MCF 10A (cell line): ENCODE measurements at regions of chr5 and their contacts with region 1.

Region 1: GRCh38 chr5:138575194-138576015 is at the start of gene HSPA9:
- DNase-seq: peak; percentile 100
- H3K4me3 Mint-ChIP-seq: peak within 1 kb of the TSS; percentile 95
- H3K27ac Mint-ChIP-seq: peak within 1 kb of the TSS; percentile 100
- H3K4me1 Mint-ChIP-seq: peaks cover 23% of the 10 kb centered on the region
- H3K27me3 Mint-ChIP-seq: no peaks in the 10 kb centered on the region
- CTCF ChIP-seq: no peak
- total RNA-seq, gene HSPA9: 1,057 and 1,102 TPM in 2 replicates

Region 2: DNA sequence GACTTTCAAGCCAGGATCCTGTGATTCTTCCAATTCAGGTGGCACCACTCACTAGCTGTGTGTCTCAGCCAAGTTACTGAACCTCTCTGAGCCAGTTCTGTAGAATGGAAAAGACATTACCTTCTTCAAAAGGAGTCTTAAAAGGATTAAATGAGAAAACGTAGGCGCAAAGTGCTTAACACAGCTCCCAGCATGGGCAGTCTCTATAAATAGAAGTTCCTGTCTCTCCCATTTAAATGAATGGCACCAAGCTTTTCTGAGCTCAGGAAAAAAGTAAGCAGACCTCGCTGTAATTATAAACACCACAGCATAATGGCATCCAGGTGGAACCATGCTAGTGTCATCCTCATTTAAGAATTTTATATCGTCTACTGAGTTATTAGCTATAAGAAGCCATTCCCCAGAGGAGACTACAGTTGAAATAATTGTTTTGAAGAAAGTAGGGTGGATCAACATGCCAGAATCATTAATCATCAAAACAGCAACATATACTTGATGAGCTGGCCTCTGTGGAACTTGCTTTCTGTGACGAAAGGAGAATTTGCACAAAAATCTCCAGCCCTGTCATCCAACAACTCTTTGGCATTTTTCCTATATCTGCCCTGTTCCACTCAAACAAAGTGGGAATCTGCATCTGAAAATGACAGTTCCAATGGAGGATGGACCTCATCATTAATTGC is 1265.2 kb before region 1 on chr5:
- CTCF ChIA-PET with region 1: no interaction called
- POLR2A ChIA-PET with region 1: no interaction called
- intact Hi-C with region 1: no loop called
- DNase-seq: peak; percentile 88
- H3K4me3 Mint-ChIP-seq: peak overlapping the region; percentile 18
- H3K27ac Mint-ChIP-seq: peak overlapping the region; percentile 95
- H3K4me1 Mint-ChIP-seq: peaks cover 28% of the 10 kb centered on the region
- H3K27me3 Mint-ChIP-seq: no peaks in the 10 kb centered on the region
- CTCF ChIP-seq: no peak

Region 3: DNA sequence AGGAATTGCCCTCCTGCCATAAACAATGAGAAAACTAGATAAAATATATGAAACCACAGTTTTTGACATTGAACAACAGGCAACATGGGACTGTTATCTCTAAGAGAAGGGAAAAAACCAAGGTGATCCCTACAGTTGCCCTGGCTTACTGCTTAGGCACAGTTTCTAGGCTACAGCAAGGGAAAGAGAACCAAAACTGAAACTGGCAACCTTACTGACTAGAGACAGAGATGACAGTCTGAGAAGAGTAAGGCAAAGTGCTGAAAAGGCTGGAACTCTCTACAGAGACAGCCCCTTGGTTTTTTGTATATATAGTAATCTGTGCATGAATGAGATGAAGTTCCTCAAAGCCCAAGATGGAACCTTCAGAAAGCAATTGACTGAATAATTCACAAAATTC is 172.8 kb before region 1 on chr5:
- CTCF ChIA-PET with region 1: no interaction called
- POLR2A ChIA-PET with region 1: no interaction called
- intact Hi-C with region 1: no loop called
- DNase-seq: no peak
- H3K4me3 Mint-ChIP-seq: no peak overlapping the region
- H3K27ac Mint-ChIP-seq: no peak overlapping the region
- H3K4me1 Mint-ChIP-seq: peaks cover 5% of the 10 kb centered on the region
- H3K27me3 Mint-ChIP-seq: no peaks in the 10 kb centered on the region
- CTCF ChIP-seq: no peak

Region 4: DNA sequence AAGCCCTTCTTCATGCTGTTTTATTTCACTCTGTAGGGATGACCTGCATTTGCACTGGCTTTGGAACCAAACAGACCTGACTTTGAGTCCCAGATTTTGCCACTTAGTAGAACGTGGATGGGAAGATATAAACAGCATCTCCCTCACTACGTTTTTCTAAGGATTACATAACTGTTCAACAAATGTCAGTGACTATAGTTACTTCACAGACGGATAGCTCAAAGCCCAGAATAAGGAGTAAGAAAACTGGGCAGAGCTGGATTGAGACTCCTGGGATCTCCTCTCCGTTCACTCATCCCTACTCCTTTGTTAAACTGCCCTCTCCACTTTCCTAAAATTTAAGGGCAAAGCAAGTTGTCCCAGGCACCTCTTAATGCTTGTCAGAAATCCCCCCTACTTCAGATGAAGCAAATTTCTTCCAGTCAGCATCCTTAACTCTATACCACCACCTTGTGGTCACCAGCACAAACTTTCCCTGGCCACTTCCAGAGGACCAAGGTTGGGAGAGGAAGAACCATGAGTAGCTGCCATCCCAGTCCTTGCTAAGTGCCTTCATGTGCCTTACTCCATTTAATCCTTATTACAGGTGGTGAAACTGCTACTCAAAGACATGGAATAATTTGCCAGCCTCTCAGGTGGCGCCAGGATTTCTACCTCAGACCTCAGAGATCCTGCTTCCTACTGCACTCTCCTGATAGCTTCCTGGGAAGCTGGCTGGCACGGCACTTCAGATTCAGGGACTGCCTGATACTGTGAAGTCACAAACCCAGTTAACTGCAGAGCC is 71.7 kb before region 1 on chr5:
- CTCF ChIA-PET with region 1: interaction called, 5 read pairs
- POLR2A ChIA-PET with region 1: interaction called, 32 read pairs
- intact Hi-C with region 1: no loop called
- DNase-seq: peak; percentile 86
- H3K4me3 Mint-ChIP-seq: no peak overlapping the region
- H3K27ac Mint-ChIP-seq: no peak overlapping the region
- H3K4me1 Mint-ChIP-seq: peaks cover 58% of the 10 kb centered on the region
- H3K27me3 Mint-ChIP-seq: no peaks in the 10 kb centered on the region
- CTCF ChIP-seq: peak; percentile 79

Region 5: DNA sequence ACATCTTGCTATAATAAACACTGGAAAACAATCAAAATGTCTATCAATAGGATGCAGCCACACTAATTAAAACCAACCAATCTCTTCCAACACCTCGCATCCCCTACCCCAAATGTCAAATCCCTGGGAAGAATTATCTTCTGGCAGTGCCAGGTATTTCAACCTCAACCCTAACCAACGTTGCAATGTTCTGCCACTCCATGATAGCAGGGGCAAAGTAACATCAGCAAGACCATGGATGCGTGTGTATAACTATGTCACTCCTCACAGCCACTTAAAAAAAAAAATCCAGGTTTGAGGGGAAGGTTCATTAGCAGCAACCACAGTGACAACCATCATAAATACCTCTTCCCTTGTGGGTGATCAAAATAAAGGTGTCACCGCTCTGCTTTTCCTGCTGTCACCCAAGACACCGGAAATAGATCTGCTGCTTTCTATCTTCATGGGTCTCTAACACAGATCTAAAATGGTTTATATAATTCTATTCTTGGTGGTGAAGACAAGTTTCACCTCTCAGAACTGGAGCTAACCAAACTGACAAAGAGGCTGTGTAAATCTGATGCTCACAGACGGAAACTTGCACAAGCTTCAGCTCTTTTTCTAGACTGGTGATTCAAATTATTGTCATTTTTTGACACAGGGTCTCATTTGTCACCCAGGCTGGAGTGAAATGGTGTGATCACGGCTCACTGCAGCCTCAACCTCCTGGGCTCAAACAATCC is 10.1 kb before region 1 on chr5:
- CTCF ChIA-PET with region 1: interaction called, 7 read pairs
- POLR2A ChIA-PET with region 1: interaction called, 20 read pairs
- intact Hi-C with region 1: no loop called
- DNase-seq: no peak
- H3K4me3 Mint-ChIP-seq: no peak overlapping the region
- H3K27ac Mint-ChIP-seq: no peak overlapping the region
- H3K4me1 Mint-ChIP-seq: peaks cover 29% of the 10 kb centered on the region
- H3K27me3 Mint-ChIP-seq: no peaks in the 10 kb centered on the region
- CTCF ChIP-seq: no peak

Region 6: DNA sequence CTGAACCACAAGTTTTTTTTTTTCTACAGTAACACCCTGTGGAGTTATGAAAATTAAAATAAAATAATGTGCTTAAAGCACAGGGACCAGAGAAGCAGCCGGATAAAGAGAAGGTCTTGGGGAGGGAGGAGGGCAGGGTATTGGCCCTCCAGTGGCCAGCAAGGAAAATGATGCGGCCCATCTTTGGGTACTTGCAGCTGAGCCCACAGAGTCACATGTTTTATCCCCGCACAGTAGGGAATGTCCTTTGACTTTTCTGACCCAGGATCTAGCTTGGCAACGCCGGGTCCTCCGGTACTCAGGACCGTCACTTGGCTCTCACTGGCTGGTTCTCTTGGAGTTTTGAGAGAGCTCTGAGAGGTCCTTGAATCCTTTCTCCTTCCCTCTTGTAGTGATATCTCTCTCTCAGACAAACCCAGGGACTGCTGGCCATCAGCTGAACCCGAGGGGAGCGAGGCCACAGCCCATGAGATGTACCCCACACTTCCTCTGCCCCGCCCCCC is 35.1 kb after region 1 on chr5:
- CTCF ChIA-PET with region 1: interaction called, 7 read pairs
- POLR2A ChIA-PET with region 1: interaction called, 19 read pairs
- intact Hi-C with region 1: no loop called
- DNase-seq: no peak
- H3K4me3 Mint-ChIP-seq: no peak overlapping the region
- H3K27ac Mint-ChIP-seq: peak overlapping the region; percentile 21
- H3K4me1 Mint-ChIP-seq: peaks cover 28% of the 10 kb centered on the region
- H3K27me3 Mint-ChIP-seq: no peaks in the 10 kb centered on the region
- CTCF ChIP-seq: peak; percentile 4

Region 7: DNA sequence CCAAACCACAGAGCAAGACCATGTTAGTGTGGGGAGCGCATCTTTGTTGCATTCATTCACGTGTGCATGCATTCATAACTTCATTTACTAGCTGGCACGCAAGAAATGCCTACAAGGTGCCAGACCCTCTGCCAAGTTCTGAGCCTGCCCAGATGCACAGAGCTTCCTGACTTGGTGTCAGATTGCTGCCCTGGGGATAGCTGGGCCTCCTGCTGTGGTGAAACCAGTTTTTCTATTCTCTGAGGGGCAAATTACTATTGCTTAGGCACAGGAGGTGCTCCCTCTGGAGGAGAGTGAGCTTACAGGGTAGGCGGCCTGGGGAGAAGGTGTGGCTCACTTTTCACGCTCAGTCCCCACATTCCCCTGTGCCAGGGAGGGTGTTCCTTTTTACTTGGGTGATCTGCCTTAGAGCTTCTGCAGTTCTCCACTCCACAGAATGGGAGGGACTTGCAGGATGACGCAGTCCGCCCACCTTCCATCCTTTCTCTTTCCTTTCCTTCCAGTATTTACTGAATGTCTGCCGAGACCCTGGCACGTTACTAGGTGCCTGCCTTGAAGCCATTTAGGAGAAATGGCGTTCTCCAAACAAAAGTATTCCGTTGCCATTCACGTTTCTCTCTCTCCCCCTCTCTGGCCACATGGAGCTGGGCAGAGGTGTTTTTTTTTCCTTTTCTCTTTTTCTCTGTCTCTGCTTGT is 149.9 kb after region 1 on chr5:
- CTCF ChIA-PET with region 1: interaction called, 11 read pairs
- POLR2A ChIA-PET with region 1: interaction called, 14 read pairs
- intact Hi-C with region 1: loop called (anchors 1 kb)
- DNase-seq: peak; percentile 100
- H3K4me3 Mint-ChIP-seq: peak overlapping the region; percentile 51
- H3K27ac Mint-ChIP-seq: peak overlapping the region; percentile 96
- H3K4me1 Mint-ChIP-seq: peaks cover 39% of the 10 kb centered on the region
- H3K27me3 Mint-ChIP-seq: no peaks in the 10 kb centered on the region
- CTCF ChIP-seq: peak; percentile 55

Region 8: GRCh38 chr5:138930371-138931097 is 355.1 kb after region 1 on chr5:
- CTCF ChIA-PET with region 1: interaction called, 10 read pairs
- POLR2A ChIA-PET with region 1: no interaction called
- intact Hi-C with region 1: no loop called
- DNase-seq: no peak
- H3K4me3 Mint-ChIP-seq: no peak overlapping the region
- H3K27ac Mint-ChIP-seq: peak overlapping the region; percentile 20
- H3K4me1 Mint-ChIP-seq: no peaks in the 10 kb centered on the region
- H3K27me3 Mint-ChIP-seq: no peaks in the 10 kb centered on the region
- CTCF ChIP-seq: no peak

Region 9: GRCh38 chr5:139061274-139061673 is 485.9 kb after region 1 on chr5:
- CTCF ChIA-PET with region 1: no interaction called
- POLR2A ChIA-PET with region 1: no interaction called
- intact Hi-C with region 1: no loop called
- DNase-seq: peak; percentile 85
- H3K4me3 Mint-ChIP-seq: peak overlapping the region; percentile 13
- H3K27ac Mint-ChIP-seq: peak overlapping the region; percentile 84
- H3K4me1 Mint-ChIP-seq: peaks cover 51% of the 10 kb centered on the region
- H3K27me3 Mint-ChIP-seq: no peaks in the 10 kb centered on the region
- CTCF ChIP-seq: no peak

Region 10: DNA sequence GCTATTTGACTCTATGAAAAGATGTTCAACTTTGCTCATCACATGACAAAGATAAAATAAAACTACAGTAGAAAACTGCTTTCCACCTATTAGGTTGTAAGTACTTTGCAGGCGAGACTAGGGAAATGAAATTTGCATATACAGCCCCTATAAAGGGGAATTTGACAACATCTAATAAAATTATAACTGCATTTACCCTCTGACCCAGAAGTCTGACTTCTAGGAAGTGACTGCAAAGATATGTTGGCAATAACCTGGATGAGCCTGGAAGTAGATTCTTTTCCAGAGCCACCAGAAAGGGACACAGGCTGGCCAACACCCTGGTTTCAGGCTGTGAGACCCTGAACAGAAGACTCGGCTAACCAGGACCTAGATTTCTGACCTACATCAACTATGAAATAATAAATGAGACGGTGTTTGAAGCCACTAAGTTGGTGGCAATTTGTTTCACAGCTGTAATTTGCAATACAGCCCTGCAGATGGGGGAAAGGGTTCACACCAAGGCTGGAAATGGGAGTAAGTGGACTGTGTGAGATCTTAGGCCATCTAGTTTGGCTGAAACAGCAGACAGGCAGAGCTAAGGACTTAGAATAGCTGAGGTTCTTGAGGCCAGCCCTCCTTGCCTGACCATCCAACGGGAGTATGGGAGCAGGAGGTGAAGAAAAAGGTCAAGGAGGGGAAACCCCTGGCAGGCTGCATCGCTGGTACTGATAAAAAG is 516.2 kb after region 1 on chr5:
- CTCF ChIA-PET with region 1: no interaction called
- POLR2A ChIA-PET with region 1: no interaction called
- intact Hi-C with region 1: no loop called
- DNase-seq: peak; percentile 18
- H3K4me3 Mint-ChIP-seq: no peak overlapping the region
- H3K27ac Mint-ChIP-seq: no peak overlapping the region
- H3K4me1 Mint-ChIP-seq: no peaks in the 10 kb centered on the region
- H3K27me3 Mint-ChIP-seq: no peaks in the 10 kb centered on the region
- CTCF ChIP-seq: no peak

Region 11: DNA sequence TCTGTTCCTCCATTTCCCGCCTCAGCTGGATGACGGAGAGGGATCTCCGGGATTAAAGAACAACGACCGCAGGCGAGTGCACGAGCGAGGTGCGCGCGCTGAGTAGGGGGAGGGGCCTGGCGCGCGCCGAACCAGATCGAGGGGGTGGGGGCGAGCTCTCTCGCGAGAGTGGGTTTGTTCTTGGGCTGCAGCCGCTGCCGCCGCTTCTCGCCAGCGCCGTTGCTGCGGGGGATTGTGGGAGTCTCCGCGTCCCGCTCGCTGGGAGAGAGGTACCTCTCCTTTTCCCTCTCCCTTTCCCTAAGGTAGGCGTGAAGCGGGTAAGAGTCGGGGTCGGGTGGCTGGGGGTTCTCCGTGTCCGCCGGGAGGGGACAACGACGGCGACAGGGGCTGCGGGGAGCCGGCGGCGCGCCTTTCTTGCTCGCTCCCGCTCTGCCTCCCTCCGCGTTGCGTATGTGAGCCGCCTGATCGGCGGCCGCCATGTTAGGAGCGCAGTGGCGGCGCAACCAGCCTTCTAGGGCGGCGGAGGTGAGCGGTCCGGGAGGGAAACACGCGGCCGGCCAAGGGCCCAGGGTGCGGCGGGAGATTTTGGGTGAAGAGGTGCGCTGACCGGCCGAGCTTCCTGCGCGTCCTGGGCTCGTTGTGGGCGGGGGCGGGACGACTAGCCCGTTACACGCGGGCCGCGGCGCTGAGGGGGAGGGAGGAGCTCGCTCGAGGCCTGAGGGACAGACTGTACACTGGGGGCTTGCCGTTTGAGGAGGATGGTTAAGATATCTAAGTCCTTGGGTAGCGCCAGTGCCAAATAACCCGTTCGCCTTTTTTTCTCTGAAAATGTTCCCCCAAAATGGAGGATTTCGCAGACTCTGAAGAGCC is 718.3 kb after region 1 on chr5 and contains the start of gene MATR3:
- CTCF ChIA-PET with region 1: no interaction called
- POLR2A ChIA-PET with region 1: interaction called, 15 read pairs
- intact Hi-C with region 1: no loop called
- DNase-seq: peak; percentile 98
- H3K4me3 Mint-ChIP-seq: peak within 1 kb of the TSS; percentile 94
- H3K27ac Mint-ChIP-seq: peak within 1 kb of the TSS; percentile 99
- H3K4me1 Mint-ChIP-seq: peaks cover 37% of the 10 kb centered on the region
- H3K27me3 Mint-ChIP-seq: no peaks in the 10 kb centered on the region
- CTCF ChIP-seq: no peak
- total RNA-seq, gene MATR3: 152 and 159 TPM in 2 replicates